ENCODE measurements at regions of chr5 and their contacts with region 1.

Region 1: GRCh38 chr5:36606428-36607113 is at the start of gene SLC1A3:
- DNase-seq: peak; percentile 70
- H3K4me3 Mint-ChIP-seq: peak within 1 kb of the TSS; percentile 96
- H3K27ac Mint-ChIP-seq: peak within 1 kb of the TSS; percentile 78
- H3K4me1 Mint-ChIP-seq: no peaks in the 10 kb centered on the region
- H3K27me3 Mint-ChIP-seq: peaks cover 13% of the 10 kb centered on the region
- CTCF ChIP-seq: no peak
- total RNA-seq, gene SLC1A3: 6.0 and 7.9 TPM in 2 replicates

Region 2: GRCh38 chr5:36657563-36657995 is 51.0 kb after region 1 on chr5:
- CTCF ChIA-PET with region 1: no interaction called
- intact Hi-C with region 1: loop called (anchors 5 kb)
- DNase-seq: peak; percentile 57
- H3K4me3 Mint-ChIP-seq: no peak overlapping the region
- H3K27ac Mint-ChIP-seq: peak overlapping the region; percentile 41
- H3K4me1 Mint-ChIP-seq: peaks cover 29% of the 10 kb centered on the region
- H3K27me3 Mint-ChIP-seq: peaks cover 25% of the 10 kb centered on the region
- CTCF ChIP-seq: no peak

Region 3: GRCh38 chr5:36777105-36777757 is 170.7 kb after region 1 on chr5:
- CTCF ChIA-PET with region 1: no interaction called
- intact Hi-C with region 1: no loop called
- DNase-seq: peak; percentile 22
- H3K4me3 Mint-ChIP-seq: no peak overlapping the region
- H3K27ac Mint-ChIP-seq: no peak overlapping the region
- H3K4me1 Mint-ChIP-seq: no peaks in the 10 kb centered on the region
- H3K27me3 Mint-ChIP-seq: peaks cover 23% of the 10 kb centered on the region
- CTCF ChIP-seq: peak; percentile 13